ENCODE measurements at regions of chr16 and their contacts with region 1.

Region 1: DNA sequence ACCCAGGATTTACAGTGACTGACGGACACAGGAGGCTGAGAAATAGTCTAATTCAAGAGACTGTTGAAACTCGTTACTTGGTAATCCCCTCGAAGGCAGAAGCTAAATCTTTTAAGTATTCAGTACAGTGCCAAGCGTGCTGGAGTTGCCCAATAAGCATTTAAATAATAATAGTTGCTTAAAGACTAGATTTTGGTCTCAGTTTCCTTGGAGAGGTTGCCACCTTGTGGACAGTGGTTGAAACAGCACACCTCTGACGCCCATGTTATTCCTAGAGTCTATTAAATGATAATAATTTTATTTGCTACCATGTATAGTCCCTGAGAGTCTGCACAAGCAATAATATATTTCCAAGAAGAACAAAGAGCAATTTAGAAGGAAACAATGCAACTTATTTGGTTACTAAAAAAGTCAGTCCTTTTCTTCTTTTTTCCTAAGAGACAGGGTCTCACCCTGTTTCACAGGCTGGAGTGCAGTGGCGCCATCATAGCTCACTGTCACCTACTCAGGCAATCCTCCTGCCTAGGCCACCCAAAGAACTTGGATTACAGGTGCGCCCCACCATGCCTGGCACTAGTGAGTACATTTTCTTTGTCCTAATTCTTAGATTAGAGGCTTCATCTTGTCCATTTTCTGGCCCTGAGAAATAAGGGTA is 138.0 kb upstream of the NUDT7 start:
- DNase-seq: peak in 4 of 5 donors; percentile 9 to 50 (median 20)
- H3K4me3 ChIP-seq: no peak overlapping the region
- H3K4me3 Mint-ChIP-seq: no peak overlapping the region
- H3K27ac ChIP-seq: no peak overlapping the region
- H3K27ac Mint-ChIP-seq: no peak overlapping the region
- H3K4me1 ChIP-seq: no peaks in the 10 kb centered on the region
- H3K4me1 Mint-ChIP-seq: no peaks in the 10 kb centered on the region
- H3K27me3 ChIP-seq: no peaks in the 10 kb centered on the region
- H3K27me3 Mint-ChIP-seq: peaks cover 16 to 42% of the 10 kb centered on the region in 2 donors

Region 2: GRCh38 chr16:77236063-77236511 is 348.2 kb before region 1 on chr16:
- CTCF ChIA-PET with region 1: interaction called, 45 read pairs
- POLR2A ChIA-PET with region 1: no interaction called
- DNase-seq: peak; percentile 78 to 87 (median 79)
- H3K4me3 ChIP-seq: no peak overlapping the region
- H3K4me3 Mint-ChIP-seq: peak overlapping the region in 6 of 7 donors; percentile 57 to 82 (median 74)
- H3K27ac ChIP-seq: no peak overlapping the region
- H3K27ac Mint-ChIP-seq: peak overlapping the region in 4 of 8 donors; percentile 17 to 64 (median 40)
- H3K4me1 ChIP-seq: no peaks in the 10 kb centered on the region
- H3K4me1 Mint-ChIP-seq: peaks cover 6 to 7% (median 6%) of the 10 kb centered on the region in 3 donors
- H3K27me3 ChIP-seq: no peaks in the 10 kb centered on the region
- H3K27me3 Mint-ChIP-seq: peaks cover 18 to 32% of the 10 kb centered on the region in 2 donors